ENCODE measurements at regions of chrX and their contacts with region 1.

Region 1: DNA sequence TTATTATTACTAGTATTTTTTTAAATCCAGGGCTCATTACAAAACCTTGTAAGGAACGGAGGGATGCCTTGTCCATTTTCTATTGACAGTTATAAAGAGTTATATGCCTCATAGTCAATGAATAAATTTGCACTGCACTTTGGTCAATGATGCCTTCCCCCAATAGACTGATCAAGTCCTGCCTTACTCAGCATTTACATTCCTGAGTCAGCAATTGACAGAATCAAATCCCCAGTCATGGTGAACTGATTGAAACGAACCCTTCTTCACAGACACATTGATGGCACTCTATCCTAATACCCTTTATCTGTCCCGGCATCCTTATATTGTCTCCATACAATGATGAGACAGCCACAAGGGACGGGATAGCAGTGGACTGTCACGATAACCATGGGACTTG is 213.2 kb downstream of the NLGN4X start:
- DNase-seq: no peak
- ATAC-seq: no peak
- H3K4me3 ChIP-seq: no peak overlapping the region
- H3K4me3 Mint-ChIP-seq: no peak overlapping the region
- H3K27ac ChIP-seq: no peak overlapping the region
- H3K27ac Mint-ChIP-seq: no peak overlapping the region
- H3K4me1 ChIP-seq: no peaks in the 10 kb centered on the region
- H3K4me1 Mint-ChIP-seq: no peaks in the 10 kb centered on the region
- H3K27me3 ChIP-seq: no peaks in the 10 kb centered on the region
- H3K27me3 Mint-ChIP-seq: peaks cover 0 to 10% of the 10 kb centered on the region in 2 donors

Region 2: DNA sequence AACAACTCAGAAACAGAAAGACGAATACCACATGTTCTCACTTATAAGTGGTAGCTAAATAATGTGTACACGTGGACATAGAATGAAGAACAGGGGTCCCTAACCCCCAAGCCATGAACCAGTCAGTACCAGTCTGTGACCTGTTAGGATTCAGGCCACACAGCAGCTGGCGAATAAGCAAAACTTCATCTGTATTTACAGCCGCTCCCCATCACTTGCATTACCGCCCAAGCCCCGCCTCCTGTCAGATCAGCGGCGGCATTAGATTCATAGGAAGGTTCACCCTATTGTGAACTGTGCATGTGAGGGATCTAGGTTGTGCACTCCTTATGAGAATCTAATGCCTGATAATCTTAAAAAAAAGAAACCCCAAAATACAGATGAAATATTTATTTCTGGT is 915.4 kb before region 1 on chrX:
- CTCF ChIA-PET with region 1: no interaction called
- POLR2A ChIA-PET with region 1: no interaction called
- DNase-seq: no peak
- ATAC-seq: no peak
- H3K4me3 ChIP-seq: no peak overlapping the region
- H3K4me3 Mint-ChIP-seq: no peak overlapping the region
- H3K27ac ChIP-seq: no peak overlapping the region
- H3K27ac Mint-ChIP-seq: no peak overlapping the region
- H3K4me1 ChIP-seq: no peaks in the 10 kb centered on the region
- H3K4me1 Mint-ChIP-seq: no peaks in the 10 kb centered on the region
- H3K27me3 ChIP-seq: no peaks in the 10 kb centered on the region
- H3K27me3 Mint-ChIP-seq: no peaks in the 10 kb centered on the region

Region 3: GRCh38 chrX:5876984-5877596 is 138.3 kb before region 1 on chrX:
- CTCF ChIA-PET with region 1: no interaction called
- POLR2A ChIA-PET with region 1: no interaction called
- DNase-seq: no peak
- ATAC-seq: no peak
- H3K4me3 ChIP-seq: no peak overlapping the region
- H3K4me3 Mint-ChIP-seq: no peak overlapping the region
- H3K27ac ChIP-seq: no peak overlapping the region
- H3K27ac Mint-ChIP-seq: no peak overlapping the region
- H3K4me1 ChIP-seq: no peaks in the 10 kb centered on the region
- H3K4me1 Mint-ChIP-seq: no peaks in the 10 kb centered on the region
- H3K27me3 ChIP-seq: no peaks in the 10 kb centered on the region
- H3K27me3 Mint-ChIP-seq: peaks cover 0 to 8% of the 10 kb centered on the region in 2 donors

Region 4: GRCh38 chrX:5957506-5957905 is 57.9 kb before region 1 on chrX:
- CTCF ChIA-PET with region 1: no interaction called
- POLR2A ChIA-PET with region 1: interaction called in 1 of 2 experiments, 14 read pairs
- DNase-seq: no peak
- ATAC-seq: no peak
- H3K4me3 ChIP-seq: no peak overlapping the region
- H3K4me3 Mint-ChIP-seq: no peak overlapping the region
- H3K27ac ChIP-seq: no peak overlapping the region
- H3K27ac Mint-ChIP-seq: no peak overlapping the region
- H3K4me1 ChIP-seq: no peaks in the 10 kb centered on the region
- H3K4me1 Mint-ChIP-seq: no peaks in the 10 kb centered on the region
- H3K27me3 ChIP-seq: no peaks in the 10 kb centered on the region
- H3K27me3 Mint-ChIP-seq: no peaks in the 10 kb centered on the region

Region 5: GRCh38 chrX:5998901-5999300 is 16.5 kb before region 1 on chrX:
- CTCF ChIA-PET with region 1: no interaction called
- POLR2A ChIA-PET with region 1: no interaction called
- DNase-seq: no peak
- ATAC-seq: no peak
- H3K4me3 ChIP-seq: no peak overlapping the region
- H3K4me3 Mint-ChIP-seq: no peak overlapping the region
- H3K27ac ChIP-seq: no peak overlapping the region
- H3K27ac Mint-ChIP-seq: no peak overlapping the region
- H3K4me1 ChIP-seq: no peaks in the 10 kb centered on the region
- H3K4me1 Mint-ChIP-seq: no peaks in the 10 kb centered on the region
- H3K27me3 ChIP-seq: no peaks in the 10 kb centered on the region
- H3K27me3 Mint-ChIP-seq: no peaks in the 10 kb centered on the region

Measured in T-cell (primary cell).